ENCODE measurements at regions of chr7 and their contacts with region 1.

Region 1: GRCh38 chr7:19117091-19117869 is at the start of gene TWIST1:
- DNase-seq: peak; percentile 89
- H3K4me3 ChIP-seq: peak within 1 kb of the TSS; percentile 96
- H3K27ac ChIP-seq: peak within 1 kb of the TSS; percentile 80
- H3K4me1 ChIP-seq: peaks cover 23% of the 10 kb centered on the region
- H3K27me3 ChIP-seq: no peaks in the 10 kb centered on the region
- CTCF ChIP-seq: no peak
- total RNA-seq, gene TWIST1: 37.6 and 41.6 TPM in 2 replicates

Region 2: DNA sequence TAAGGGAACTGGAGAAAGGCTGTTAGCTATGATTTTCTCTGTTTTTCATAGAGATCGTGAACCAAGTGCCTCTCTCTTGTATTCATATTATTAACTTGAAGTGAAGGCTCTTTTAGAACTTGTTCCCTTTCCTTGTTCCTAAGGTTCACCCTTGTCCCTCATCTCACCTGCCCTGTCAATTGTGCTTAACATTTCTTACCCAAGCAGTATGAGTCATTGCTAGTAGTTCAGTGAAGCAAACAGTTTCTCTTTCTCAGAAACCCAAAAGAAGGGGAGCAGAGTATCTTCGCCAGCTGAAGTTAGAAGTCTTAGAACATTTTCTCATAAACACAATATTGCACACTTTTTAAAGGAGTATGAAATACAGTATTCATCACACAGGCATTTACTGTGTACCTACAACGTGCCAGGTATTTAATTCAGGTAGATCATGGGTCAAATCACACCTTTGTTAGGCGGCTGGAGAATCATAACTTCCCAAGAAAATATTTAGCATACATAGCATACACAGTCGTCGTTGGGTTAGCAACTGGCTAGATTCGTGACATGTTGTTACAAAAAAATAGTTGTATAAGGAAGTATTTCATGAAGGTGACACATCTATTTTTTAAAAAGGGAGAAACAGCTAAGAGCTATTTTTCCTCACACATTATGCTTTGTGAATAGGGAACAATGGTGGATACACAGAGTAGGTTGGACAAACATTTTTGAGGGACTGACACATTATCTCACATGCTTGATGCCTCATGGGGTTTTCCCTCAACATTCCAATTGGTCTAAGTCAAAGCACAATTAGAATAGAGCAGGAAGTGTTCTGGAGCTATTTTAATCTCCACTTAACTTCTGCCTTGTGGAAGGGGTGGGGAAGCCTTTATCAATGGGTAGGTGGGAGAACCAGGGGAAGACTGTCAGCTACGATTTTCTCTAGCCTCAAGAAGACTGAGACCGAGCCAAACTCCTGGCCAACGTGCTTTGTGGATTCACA is 608.5 kb before region 1 on chr7:
- CTCF ChIA-PET with region 1: interaction called, 21 read pairs
- POLR2A ChIA-PET with region 1: no interaction called
- intact Hi-C with region 1: no loop called
- DNase-seq: peak; percentile 88
- H3K4me3 ChIP-seq: peak overlapping the region; percentile 29
- H3K27ac ChIP-seq: peak overlapping the region; percentile 65
- H3K4me1 ChIP-seq: peaks cover 48% of the 10 kb centered on the region
- H3K27me3 ChIP-seq: no peaks in the 10 kb centered on the region
- CTCF ChIP-seq: no peak

Region 3: GRCh38 chr7:18666107-18666728 is 451.1 kb before region 1 on chr7:
- CTCF ChIA-PET with region 1: no interaction called
- POLR2A ChIA-PET with region 1: no interaction called
- intact Hi-C with region 1: loop called (anchors 5 kb)
- DNase-seq: peak; percentile 87
- H3K4me3 ChIP-seq: no peak overlapping the region
- H3K27ac ChIP-seq: peak overlapping the region; percentile 73
- H3K4me1 ChIP-seq: peaks cover 42% of the 10 kb centered on the region
- H3K27me3 ChIP-seq: no peaks in the 10 kb centered on the region
- CTCF ChIP-seq: peak; percentile 99

Region 4: DNA sequence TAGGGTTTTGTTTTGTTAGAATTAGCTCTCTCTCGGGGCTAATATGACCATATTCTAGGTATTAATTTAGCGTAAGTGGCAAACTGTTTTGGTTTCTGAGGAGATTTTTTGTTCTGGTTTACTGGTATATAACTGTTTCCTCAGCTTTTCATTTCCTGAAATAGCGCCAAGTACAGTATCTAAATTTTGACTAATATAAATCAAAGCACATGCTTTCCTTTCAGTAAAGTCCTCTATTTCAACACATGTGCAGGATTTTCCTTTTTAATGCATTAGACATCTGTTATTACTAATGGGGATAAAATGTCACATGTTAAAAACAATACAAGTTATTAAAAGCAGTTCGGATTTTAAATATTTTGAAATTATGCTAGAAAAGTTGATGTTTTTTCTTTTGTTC is 16.6 kb after region 1 on chr7:
- CTCF ChIA-PET with region 1: no interaction called
- POLR2A ChIA-PET with region 1: no interaction called
- intact Hi-C with region 1: no loop called
- DNase-seq: no peak
- H3K4me3 ChIP-seq: no peak overlapping the region
- H3K27ac ChIP-seq: no peak overlapping the region
- H3K4me1 ChIP-seq: peaks cover 7% of the 10 kb centered on the region
- H3K27me3 ChIP-seq: no peaks in the 10 kb centered on the region
- CTCF ChIP-seq: no peak

Region 5: GRCh38 chr7:19262826-19263225 is 145.5 kb after region 1 on chr7:
- CTCF ChIA-PET with region 1: no interaction called
- POLR2A ChIA-PET with region 1: no interaction called
- intact Hi-C with region 1: loop called (anchors 5 kb)
- DNase-seq: peak; percentile 16
- H3K4me3 ChIP-seq: no peak overlapping the region
- H3K27ac ChIP-seq: no peak overlapping the region
- H3K4me1 ChIP-seq: no peaks in the 10 kb centered on the region
- H3K27me3 ChIP-seq: no peaks in the 10 kb centered on the region
- CTCF ChIP-seq: peak; percentile 51; the same call in 1 of the 2 replicates

Region 6: DNA sequence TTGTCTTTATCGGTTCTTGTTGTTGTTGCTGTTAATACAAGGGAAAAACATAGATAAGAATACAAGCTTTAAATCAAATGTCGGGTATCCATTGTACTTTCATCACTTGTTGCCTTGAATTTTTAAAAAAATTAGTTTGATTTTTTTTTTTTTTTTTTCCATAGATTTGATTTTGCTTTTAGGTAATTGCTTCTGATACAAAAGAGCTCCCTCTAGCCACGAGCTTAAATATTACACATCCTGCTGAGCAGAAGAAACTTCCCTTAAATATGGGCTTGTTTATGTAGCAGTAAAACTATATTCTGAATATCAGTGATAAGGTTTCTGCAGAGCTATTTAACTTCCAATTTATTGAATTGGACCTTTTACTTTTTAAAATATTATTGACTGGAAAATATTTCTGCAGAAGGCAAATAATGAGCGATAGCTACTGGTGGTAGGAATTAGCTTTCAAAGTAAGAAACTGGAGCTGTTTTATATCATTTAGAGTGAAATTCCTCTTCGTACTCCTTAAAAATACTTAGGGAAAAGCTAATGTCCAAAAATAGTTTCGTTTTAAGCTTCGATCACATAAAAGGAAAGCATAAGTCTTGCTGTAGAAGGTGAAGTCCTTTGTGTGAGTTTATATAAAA is 374.7 kb after region 1 on chr7:
- CTCF ChIA-PET with region 1: interaction called, 11 read pairs
- POLR2A ChIA-PET with region 1: interaction called, 3 read pairs
- intact Hi-C with region 1: loop called (anchors 5 kb)
- DNase-seq: peak; percentile 37
- H3K4me3 ChIP-seq: no peak overlapping the region
- H3K27ac ChIP-seq: no peak overlapping the region
- H3K4me1 ChIP-seq: no peaks in the 10 kb centered on the region
- H3K27me3 ChIP-seq: no peaks in the 10 kb centered on the region
- CTCF ChIP-seq: peak; percentile 75

Region 7: DNA sequence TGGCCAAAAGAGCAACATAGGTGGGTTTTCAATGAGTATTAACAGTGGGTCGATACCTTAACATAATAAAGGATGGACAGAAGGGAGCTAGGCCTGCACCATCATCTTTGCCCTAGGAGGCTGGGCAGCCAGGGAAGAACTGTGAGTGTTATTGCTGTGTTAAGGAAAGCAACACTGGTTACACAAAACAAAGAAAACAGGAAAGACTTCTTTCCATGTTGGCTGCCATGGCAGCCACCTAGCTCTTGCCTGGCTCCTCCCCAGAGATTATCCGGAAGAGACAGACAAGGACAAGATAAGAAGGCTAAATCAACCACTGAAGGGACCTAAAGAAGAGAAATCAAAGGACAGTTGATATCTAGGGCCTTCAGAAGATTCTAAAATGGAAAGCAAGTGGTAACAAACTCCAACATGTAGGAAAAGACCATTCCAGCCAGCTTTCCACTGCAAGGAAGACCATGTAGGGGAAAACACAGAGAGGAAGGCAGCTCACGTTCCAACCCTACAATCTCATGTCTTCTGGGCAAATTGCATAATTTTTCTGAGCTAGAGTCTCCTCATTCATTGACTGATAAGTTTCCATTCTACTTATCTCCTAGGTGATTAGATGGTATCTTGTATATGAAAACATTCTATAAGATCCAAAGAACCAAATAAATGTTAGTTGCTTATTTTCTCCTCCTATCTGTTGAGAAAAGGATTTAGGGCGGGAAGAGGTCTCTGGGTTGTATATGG is 1618.2 kb after region 1 on chr7:
- CTCF ChIA-PET with region 1: interaction called, 12 read pairs
- POLR2A ChIA-PET with region 1: no interaction called
- intact Hi-C with region 1: no loop called
- DNase-seq: no peak
- H3K4me3 ChIP-seq: no peak overlapping the region
- H3K27ac ChIP-seq: no peak overlapping the region
- H3K4me1 ChIP-seq: no peaks in the 10 kb centered on the region
- H3K27me3 ChIP-seq: peaks cover 23% of the 10 kb centered on the region
- CTCF ChIP-seq: no peak